Activated CD4-positive, alpha-beta memory T cell treated with anti-CD3 and anti-CD28 coated beads, Interleukin-2, amount 10 ng/mL, durations not matched to agents 7 days and 5 days (primary cell): ENCODE measurements at regions of chr6 and their contacts with region 1.

Region 1: GRCh38 chr6:37257634-37258404 is at the starts of genes TBC1D22B and TMEM217:
- DNase-seq: peak; percentile 97
- H3K4me3 Mint-ChIP-seq: peak within 1 kb of the TSS; percentile 83
- H3K27ac Mint-ChIP-seq: peak within 1 kb of the TSS; percentile 86
- H3K4me1 Mint-ChIP-seq: peaks cover 44% of the 10 kb centered on the region
- H3K27me3 Mint-ChIP-seq: no peaks in the 10 kb centered on the region
- total RNA-seq, gene TBC1D22B: 16.5 TPM
- total RNA-seq, gene TMEM217: 1.6 to 2.1 TPM

Region 2: DNA sequence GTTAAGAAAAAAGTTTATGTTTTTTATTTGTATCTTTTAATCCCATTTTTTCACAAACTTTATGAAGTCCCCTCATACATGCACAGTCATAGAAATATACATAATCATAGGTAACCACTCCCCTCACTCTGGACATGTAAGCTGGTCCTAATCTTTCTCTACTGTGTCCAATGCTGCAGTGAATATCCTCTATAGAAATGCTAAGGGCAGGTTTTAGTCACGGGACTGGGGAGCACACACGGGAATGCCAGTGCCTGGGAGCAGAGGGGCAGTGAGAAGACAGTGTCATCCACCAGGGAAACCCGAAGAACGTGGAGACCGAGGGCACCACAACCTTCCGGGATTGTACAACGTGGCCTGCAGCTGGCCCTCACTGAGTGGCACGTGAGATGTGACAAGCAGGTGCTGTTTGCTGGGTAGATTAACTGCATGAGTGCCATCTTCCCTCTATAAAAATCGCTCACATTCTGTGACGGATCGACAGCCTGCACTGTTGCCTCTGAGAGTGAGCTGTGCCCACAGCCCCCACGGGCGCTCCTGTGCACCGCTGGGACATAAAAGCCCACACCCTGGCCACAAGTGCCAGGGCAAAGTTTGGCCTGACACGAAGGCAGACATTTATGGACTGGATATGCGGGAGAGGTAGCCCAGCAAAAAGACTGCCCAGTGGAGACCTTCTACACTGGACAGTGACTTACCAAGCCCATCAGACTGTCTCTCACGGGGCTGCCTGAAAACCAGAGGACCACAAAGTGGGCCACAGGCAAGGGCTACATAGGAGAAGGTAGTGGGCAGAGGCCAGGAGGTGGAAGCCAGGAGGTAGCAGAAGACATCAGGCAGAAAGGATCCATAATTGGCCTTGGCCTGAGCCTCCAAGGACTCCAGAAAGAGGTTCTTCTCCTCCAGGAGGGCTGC is 189.2 kb before region 1 on chr6:
- CTCF ChIA-PET with region 1: no interaction called
- POLR2A ChIA-PET with region 1: no interaction called
- DNase-seq: no peak
- H3K4me3 Mint-ChIP-seq: no peak overlapping the region
- H3K27ac Mint-ChIP-seq: no peak overlapping the region
- H3K4me1 Mint-ChIP-seq: peaks cover 26% of the 10 kb centered on the region
- H3K27me3 Mint-ChIP-seq: no peaks in the 10 kb centered on the region

Region 3: GRCh38 chr6:37272834-37273566 is 15.2 kb after region 1 on chr6:
- CTCF ChIA-PET with region 1: no interaction called
- POLR2A ChIA-PET with region 1: interaction called, 16 read pairs
- DNase-seq: no peak
- H3K4me3 Mint-ChIP-seq: peak overlapping the region; percentile 38
- H3K27ac Mint-ChIP-seq: peak overlapping the region; percentile 64
- H3K4me1 Mint-ChIP-seq: peaks cover 59% of the 10 kb centered on the region
- H3K27me3 Mint-ChIP-seq: no peaks in the 10 kb centered on the region

Region 4: DNA sequence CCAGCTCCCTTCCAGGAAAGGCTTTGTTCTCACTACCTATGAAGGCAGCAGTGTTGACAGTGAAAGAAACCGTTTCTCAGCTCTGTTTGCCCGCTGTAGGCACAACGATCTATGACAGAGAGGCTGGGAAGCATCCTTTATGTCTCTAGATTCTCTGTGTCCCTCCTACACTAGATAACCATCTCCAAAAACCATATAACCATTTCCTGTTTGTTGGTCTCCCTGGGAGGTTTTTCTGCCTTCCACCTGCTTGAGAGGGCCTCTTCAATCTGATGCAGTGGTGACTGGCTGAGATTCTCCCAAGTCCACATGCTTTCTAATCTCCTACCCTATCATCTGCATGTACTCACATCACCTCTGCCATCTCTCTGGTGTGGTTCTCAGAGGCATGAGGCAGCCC is 32.1 kb after region 1 on chr6:
- CTCF ChIA-PET with region 1: interaction called, 3 read pairs
- POLR2A ChIA-PET with region 1: interaction called, 10 read pairs
- DNase-seq: peak; percentile 51
- H3K4me3 Mint-ChIP-seq: peak overlapping the region; percentile 19
- H3K27ac Mint-ChIP-seq: peak overlapping the region; percentile 73
- H3K4me1 Mint-ChIP-seq: peaks cover 49% of the 10 kb centered on the region
- H3K27me3 Mint-ChIP-seq: no peaks in the 10 kb centered on the region